OCI-LY7 (cell line): ENCODE measurements at regions of chr11 and their contacts with region 1.

Region 1: GRCh38 chr11:112229746-112230433 is 3.7 kb downstream of the PTS start:
- DNase-seq: no peak
- H3K4me3 ChIP-seq: no peak overlapping the region
- H3K27ac ChIP-seq: no peak overlapping the region
- H3K4me1 ChIP-seq: peaks cover 10% of the 10 kb centered on the region
- CTCF ChIP-seq: no peak

Region 2: DNA sequence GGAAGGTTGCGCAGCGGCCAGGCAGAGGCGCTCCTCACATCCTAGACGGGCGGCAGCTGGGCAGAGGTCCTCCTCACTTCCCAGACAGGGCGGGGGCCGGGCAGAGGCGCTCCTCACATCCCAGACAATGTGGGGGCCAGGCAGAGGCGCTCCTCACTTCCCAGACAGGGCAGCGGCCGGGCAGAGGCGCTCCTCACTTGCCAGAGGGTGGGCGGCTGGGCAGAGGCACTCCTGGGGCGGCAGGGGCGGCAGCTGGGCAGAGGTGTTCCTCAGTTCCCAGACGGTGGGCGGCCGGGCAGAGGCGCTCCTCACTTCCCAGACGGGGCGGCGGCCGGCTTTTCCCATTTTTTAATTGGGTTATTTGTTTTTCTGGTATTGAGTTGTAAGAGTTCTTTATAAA is 23.8 kb before region 1 on chr11:
- CTCF ChIA-PET with region 1: no interaction called
- POLR2A ChIA-PET with region 1: no interaction called
- intact Hi-C with region 1: no loop called
- DNase-seq: no peak
- H3K4me3 ChIP-seq: no peak overlapping the region
- H3K27ac ChIP-seq: no peak overlapping the region
- H3K4me1 ChIP-seq: no peaks in the 10 kb centered on the region
- CTCF ChIP-seq: no peak

Region 3: DNA sequence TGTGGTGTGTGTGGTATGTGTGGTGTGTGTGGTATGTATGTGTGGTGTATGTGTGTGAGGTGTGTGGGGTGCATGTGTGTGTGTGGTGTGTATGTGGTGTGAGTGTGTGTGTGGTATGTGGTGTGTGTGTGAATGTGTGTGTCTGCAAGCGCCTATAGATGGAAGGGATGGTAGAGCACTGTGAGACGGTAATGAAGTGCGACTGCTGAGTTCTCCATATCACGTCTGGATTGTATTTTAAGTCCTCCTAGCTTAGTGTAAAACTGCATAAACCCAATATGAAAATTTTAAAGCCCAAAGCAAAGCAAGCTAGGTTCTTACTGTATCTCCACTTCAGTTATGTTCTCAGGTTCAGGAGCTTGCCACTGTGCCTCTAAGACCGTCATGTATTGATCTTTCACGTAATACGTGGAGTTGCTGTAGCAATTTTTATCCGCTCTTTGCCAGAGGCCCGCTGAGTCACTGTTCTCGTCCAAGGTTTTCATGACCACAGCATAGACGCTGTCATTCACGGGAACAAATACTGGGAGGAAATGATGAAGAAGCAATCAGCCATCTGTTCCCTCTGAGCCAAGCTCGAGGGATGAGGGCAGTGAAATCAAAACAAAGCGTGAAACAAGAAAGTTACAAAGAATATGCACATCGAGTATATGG is 25.3 kb after region 1 on chr11:
- CTCF ChIA-PET with region 1: no interaction called
- POLR2A ChIA-PET with region 1: interaction called, 12 read pairs
- intact Hi-C with region 1: no loop called
- DNase-seq: no peak
- H3K4me3 ChIP-seq: no peak overlapping the region
- H3K27ac ChIP-seq: no peak overlapping the region
- H3K4me1 ChIP-seq: no peaks in the 10 kb centered on the region
- CTCF ChIP-seq: no peak